ENCODE measurements at regions of chr14 and their contacts with region 1.

Region 1: GRCh38 chr14:39368261-39368959 is 63.8 kb downstream of the FBXO33 start:
- DNase-seq: no peak
- ATAC-seq: peak; percentile 77

Region 2: DNA sequence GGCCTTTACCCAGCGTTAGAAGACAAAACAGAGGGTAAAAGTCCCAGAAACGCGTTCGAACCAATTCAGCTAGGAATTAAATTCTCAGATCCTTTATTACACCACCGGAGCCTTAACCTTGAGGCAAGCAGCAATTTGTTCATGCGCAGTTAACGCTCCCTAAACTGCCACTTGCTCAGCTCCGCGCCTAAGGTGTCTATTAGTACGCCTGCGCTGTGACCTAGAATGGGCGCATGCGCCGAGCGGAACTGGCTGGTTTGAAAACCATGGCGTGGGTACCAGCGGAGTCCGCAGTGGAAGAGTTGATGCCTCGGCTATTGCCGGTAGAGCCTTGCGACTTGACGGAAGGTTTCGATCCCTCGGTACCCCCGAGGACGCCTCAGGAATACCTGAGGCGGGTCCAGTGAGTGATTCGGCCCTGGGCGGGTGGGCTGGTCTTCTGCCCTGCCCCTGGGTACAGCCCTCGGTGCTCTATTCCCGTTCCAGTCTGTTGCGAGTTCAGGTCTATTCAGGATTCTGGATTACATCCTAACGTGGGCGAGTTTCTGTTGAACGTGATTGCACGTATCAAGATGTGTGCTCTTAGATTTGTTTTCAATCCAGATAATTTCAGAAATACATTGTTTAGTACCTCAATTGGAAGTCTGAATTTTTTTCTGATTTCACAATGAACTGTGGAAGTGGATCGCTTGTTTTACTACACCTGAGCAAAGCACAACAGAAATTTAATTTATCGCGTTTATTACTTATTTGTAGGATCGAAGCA is 254.2 kb before region 1 on chr14 and contains the start of gene GEMIN2:
- intact Hi-C with region 1: loop called (anchors 5 kb)
- DNase-seq: peak; percentile 98
- ATAC-seq: peak; percentile 100
- total RNA-seq, gene GEMIN2: 7.0 TPM